ENCODE measurements at regions of chr2 and their contacts with region 1.

Region 1: GRCh38 chr2:164737612-164738081 is 104.0 kb downstream of the COBLL1 start:
- DNase-seq: peak; percentile 80
- H3K4me3 Mint-ChIP-seq: no peak overlapping the region
- H3K27ac Mint-ChIP-seq: no peak overlapping the region
- H3K4me1 Mint-ChIP-seq: peaks cover 33% of the 10 kb centered on the region
- H3K27me3 Mint-ChIP-seq: no peaks in the 10 kb centered on the region
- CTCF ChIP-seq: peak; percentile 56

Region 2: GRCh38 chr2:164661362-164661761 is 76.3 kb before region 1 on chr2:
- CTCF ChIA-PET with region 1: no interaction called
- POLR2A ChIA-PET with region 1: no interaction called
- intact Hi-C with region 1: no loop called
- DNase-seq: peak; percentile 54
- H3K4me3 Mint-ChIP-seq: no peak overlapping the region
- H3K27ac Mint-ChIP-seq: no peak overlapping the region
- H3K4me1 Mint-ChIP-seq: no peaks in the 10 kb centered on the region
- H3K27me3 Mint-ChIP-seq: no peaks in the 10 kb centered on the region
- CTCF ChIP-seq: no peak

Region 3: DNA sequence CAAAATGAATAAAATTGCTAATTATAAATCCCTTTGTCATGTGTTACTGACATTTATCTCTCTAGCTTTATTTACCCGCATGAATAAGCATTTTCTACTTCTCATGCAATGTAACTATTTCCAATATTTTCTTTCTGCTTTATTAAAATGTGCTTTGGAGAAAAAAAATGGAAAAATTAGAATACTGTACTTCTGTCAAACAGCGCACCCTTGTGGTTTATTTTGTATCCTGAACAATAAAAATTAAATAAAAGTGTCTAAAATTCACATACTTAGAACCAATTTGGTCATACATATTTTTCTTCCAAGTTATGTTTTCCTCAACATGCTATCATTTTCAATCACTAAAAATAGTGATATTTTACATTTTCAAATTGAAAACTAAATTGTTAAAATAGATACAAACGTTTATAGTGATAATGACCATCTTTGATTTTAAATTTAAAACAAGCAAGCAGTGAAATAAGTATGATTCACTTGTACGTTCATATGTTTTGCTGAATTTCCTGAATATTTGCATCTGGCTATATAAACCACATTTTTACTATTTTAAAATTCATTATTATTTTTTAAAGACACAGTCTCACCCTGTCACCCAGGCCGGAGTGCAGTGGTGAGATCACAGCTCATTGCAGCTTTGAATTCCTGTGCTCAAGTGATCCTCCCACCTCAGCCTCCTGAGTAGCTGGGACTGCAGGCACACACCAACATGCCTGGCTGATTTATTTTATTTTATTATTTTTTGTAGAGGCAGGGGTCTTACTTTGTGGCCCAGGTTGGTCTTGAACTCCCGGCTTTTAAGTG is 20.4 kb before region 1 on chr2:
- CTCF ChIA-PET with region 1: interaction called, 10 read pairs
- POLR2A ChIA-PET with region 1: interaction called, 11 read pairs
- intact Hi-C with region 1: no loop called
- DNase-seq: peak; percentile 56
- H3K4me3 Mint-ChIP-seq: no peak overlapping the region
- H3K27ac Mint-ChIP-seq: no peak overlapping the region
- H3K4me1 Mint-ChIP-seq: peaks cover 15% of the 10 kb centered on the region
- H3K27me3 Mint-ChIP-seq: no peaks in the 10 kb centered on the region
- CTCF ChIP-seq: peak; percentile 53

Region 4: GRCh38 chr2:164826293-164827243 is 88.9 kb after region 1 on chr2:
- CTCF ChIA-PET with region 1: interaction called, 3 read pairs
- POLR2A ChIA-PET with region 1: interaction called, 3 read pairs
- intact Hi-C with region 1: loop called (anchors 1 kb)
- DNase-seq: peak; percentile 64
- H3K4me3 Mint-ChIP-seq: peak overlapping the region; percentile 22
- H3K27ac Mint-ChIP-seq: peak overlapping the region; percentile 90
- H3K4me1 Mint-ChIP-seq: peaks cover 14% of the 10 kb centered on the region
- H3K27me3 Mint-ChIP-seq: no peaks in the 10 kb centered on the region
- CTCF ChIP-seq: no peak

Region 5: DNA sequence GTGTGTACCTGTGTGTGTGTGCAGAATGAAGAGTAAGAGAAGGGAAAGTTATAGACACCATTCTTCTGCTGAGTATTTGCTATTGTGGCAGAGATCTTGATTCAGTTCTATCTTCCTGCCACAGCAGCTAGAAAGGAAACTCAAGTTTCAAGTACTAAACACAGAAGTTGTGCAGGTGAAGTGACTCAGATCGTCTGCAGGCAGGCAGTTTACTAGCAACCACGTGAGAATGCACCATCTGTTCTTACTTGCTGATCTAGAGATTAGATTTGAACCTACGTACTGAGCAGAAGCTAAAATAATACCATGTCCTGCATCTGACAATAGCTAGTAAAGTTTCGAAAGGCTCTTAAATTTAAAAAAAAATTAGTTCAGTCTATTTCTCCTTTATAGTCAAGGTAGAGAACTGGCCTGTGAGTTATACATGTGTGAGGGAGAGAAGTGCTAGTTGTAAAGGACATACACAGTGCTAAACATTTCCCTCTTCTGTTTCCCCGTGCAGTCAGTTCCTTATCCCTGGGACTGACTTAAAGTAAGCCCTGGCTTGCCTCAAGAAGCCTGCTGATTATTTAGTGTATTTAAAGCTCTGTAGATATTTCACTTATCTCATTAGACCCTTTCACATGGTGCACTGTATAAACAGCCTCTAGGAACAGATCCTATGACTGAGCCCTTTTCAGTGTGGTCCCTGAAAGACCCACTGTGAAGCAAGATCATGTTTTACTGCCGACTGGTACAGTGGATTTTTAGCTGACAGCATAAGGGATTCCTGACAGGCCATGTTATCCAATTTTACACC is 172.7 kb after region 1 on chr2:
- CTCF ChIA-PET with region 1: interaction called, 67 read pairs
- POLR2A ChIA-PET with region 1: interaction called, 16 read pairs
- intact Hi-C with region 1: loop called (anchors 1 kb)
- DNase-seq: peak; percentile 61
- H3K4me3 Mint-ChIP-seq: peak overlapping the region; percentile 11
- H3K27ac Mint-ChIP-seq: peak overlapping the region; percentile 84
- H3K4me1 Mint-ChIP-seq: peaks cover 16% of the 10 kb centered on the region
- H3K27me3 Mint-ChIP-seq: no peaks in the 10 kb centered on the region
- CTCF ChIP-seq: no peak

Region 6: DNA sequence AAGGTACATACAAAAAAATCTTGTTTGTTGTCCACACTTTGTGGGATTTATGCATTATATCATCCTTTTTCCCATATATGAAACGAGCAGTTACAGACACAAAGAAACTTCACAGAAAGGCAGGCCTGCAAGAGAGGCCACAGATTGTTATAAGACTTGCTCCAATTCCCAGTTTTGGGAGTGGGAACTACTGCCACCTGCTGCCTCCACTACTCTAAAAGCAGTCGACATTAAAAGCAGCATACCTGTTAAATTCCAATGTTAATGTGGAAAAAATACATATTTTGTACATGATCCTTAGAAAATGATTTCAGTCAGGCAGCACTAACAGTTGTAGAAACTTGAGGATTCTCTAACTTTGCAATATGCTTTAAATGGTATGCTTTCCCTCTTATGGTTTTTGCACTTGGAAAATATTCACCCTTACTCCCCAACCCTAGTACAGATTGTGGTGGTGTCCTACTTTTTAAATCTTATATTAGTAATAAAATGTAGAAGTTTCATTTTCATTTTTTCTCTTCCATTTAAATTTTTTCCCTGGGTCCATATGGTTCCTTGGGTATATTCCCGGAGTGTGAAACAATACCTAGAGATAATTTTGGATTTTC is 179.8 kb after region 1 on chr2:
- CTCF ChIA-PET with region 1: interaction called, 67 read pairs
- POLR2A ChIA-PET with region 1: interaction called, 16 read pairs
- intact Hi-C with region 1: loop called (anchors 1 kb)
- DNase-seq: peak; percentile 65
- H3K4me3 Mint-ChIP-seq: no peak overlapping the region
- H3K27ac Mint-ChIP-seq: no peak overlapping the region
- H3K4me1 Mint-ChIP-seq: peaks cover 8% of the 10 kb centered on the region
- H3K27me3 Mint-ChIP-seq: no peaks in the 10 kb centered on the region
- CTCF ChIP-seq: peak; percentile 58

Region 7: GRCh38 chr2:164992818-164993217 is 255.2 kb after region 1 on chr2:
- CTCF ChIA-PET with region 1: interaction called, 6 read pairs
- POLR2A ChIA-PET with region 1: no interaction called
- intact Hi-C with region 1: loop called (anchors 5 kb)
- DNase-seq: peak; percentile 87
- H3K4me3 Mint-ChIP-seq: no peak overlapping the region
- H3K27ac Mint-ChIP-seq: peak overlapping the region; percentile 31
- H3K4me1 Mint-ChIP-seq: peaks cover 22% of the 10 kb centered on the region
- H3K27me3 Mint-ChIP-seq: no peaks in the 10 kb centered on the region
- CTCF ChIP-seq: peak; percentile 30

Region 8: GRCh38 chr2:165203689-165204559 is 466.3 kb after region 1 on chr2 and contains the start of gene SCN3A:
- CTCF ChIA-PET with region 1: interaction called, 8 read pairs
- POLR2A ChIA-PET with region 1: no interaction called
- intact Hi-C with region 1: loop called (anchors 5 kb)
- DNase-seq: peak; percentile 58
- H3K4me3 Mint-ChIP-seq: no peak within 1 kb of the TSS
- H3K27ac Mint-ChIP-seq: no peak within 1 kb of the TSS
- H3K4me1 Mint-ChIP-seq: no peaks in the 10 kb centered on the region
- H3K27me3 Mint-ChIP-seq: peaks cover 72% of the 10 kb centered on the region
- CTCF ChIP-seq: peak; percentile 70
- total RNA-seq, gene SCN3A: not detected in 2 replicates

Measured in MCF 10A (cell line).